ENCODE measurements at regions of chr13 and their contacts with region 1.

Region 1: DNA sequence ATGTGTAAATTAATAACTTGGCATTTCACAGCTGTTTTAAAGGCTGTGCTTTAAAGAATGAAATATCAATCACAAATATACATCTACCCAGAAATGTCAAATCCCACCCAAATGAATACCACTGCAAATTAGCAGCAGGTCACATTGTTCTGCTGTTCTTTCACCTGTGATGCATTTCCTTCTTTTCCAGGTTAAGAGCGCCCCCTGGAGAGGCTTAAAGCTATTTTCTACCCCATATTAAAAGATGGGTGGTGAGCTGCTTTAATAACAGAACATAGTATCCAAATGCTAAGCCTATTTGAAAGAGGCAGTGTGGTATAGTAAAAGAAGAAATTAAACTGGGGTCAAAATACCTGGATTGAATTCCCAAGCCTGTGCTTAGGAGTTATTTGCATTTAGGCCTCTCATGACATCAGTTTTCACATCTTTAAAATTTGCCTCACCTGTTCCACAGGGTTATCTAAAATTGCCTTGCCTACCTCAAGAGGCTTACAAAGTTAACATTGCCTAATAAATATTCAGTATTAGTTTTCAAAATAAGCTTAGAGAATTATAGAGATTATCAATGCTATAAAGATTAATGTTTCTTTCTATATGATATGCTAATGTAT is 396.9 kb upstream of the SLITRK5 start:
- DNase-seq: no peak
- ATAC-seq: peak; percentile 77
- H3K4me3 ChIP-seq: no peak overlapping the region
- H3K27ac ChIP-seq: no peak overlapping the region; the same call in 1 of the 2 replicates
- H3K4me1 ChIP-seq: no peaks in the 10 kb centered on the region; the same call in 1 of the 2 replicates
- H3K27me3 ChIP-seq: no peaks in the 10 kb centered on the region
- CTCF ChIP-seq: peak; percentile 64; the same call in 1 of the 2 replicates

Region 2: DNA sequence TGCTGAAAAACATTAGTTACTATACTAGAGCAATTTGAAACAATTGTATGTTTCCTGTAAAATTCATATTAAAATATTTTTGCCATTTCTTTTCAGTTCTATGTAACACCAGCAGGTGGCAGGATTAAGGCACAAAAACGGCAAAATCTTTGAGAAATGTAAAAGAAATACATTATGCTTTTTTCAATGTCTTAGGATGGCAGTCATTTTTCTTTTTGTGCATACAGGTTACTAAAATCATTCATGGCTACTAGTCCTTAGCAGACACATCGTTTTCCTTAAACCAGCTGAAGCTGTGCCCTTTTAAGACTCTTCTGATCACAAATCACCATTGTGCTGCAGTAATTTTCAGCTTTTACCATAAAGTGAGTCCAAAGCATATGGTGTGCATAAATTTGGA is 403.9 kb before region 1 on chr13:
- CTCF ChIA-PET with region 1: interaction called, 7 read pairs
- POLR2A ChIA-PET with region 1: no interaction called
- in situ Hi-C with region 1: no loop called
- intact Hi-C with region 1: loop called (anchors 1 kb)
- DNase-seq: no peak
- ATAC-seq: no peak
- H3K4me3 ChIP-seq: no peak overlapping the region
- H3K27ac ChIP-seq: peak overlapping the region; percentile 73; the same call in 1 of the 2 replicates
- H3K4me1 ChIP-seq: peaks cover 4% of the 10 kb centered on the region; the same call in 1 of the 2 replicates
- H3K27me3 ChIP-seq: no peaks in the 10 kb centered on the region
- CTCF ChIP-seq: peak; percentile 47; the same call in 1 of the 2 replicates